CD8-positive, alpha-beta memory T cell (primary cell): ENCODE measurements at regions of chr9 and their contacts with region 1.

Region 1: GRCh38 chr9:4792572-4793458 is at the start of gene RCL1:
- DNase-seq: peak; percentile 93 to 97 (median 96)
- H3K4me3 ChIP-seq: peak within 1 kb of the TSS; percentile 82
- H3K4me3 Mint-ChIP-seq: peak within 1 kb of the TSS; percentile 92 to 96 (median 95)
- H3K27ac ChIP-seq: peak within 1 kb of the TSS; percentile 92
- H3K27ac Mint-ChIP-seq: peak within 1 kb of the TSS; percentile 94 to 99 (median 95)
- H3K4me1 ChIP-seq: peaks cover 20% of the 10 kb centered on the region
- H3K4me1 Mint-ChIP-seq: peaks cover 21 to 53% (median 48%) of the 10 kb centered on the region in 3 donors
- H3K27me3 ChIP-seq: no peaks in the 10 kb centered on the region
- H3K27me3 Mint-ChIP-seq: peaks cover 1 to 2% of the 10 kb centered on the region in 2 donors
- total RNA-seq, gene RCL1: 36.5 to 39.1 TPM

Region 2: GRCh38 chr9:4519604-4520003 is 273.2 kb before region 1 on chr9:
- CTCF ChIA-PET with region 1: no interaction called
- POLR2A ChIA-PET with region 1: no interaction called
- DNase-seq: no peak
- H3K4me3 ChIP-seq: no peak overlapping the region
- H3K4me3 Mint-ChIP-seq: no peak overlapping the region
- H3K27ac ChIP-seq: no peak overlapping the region
- H3K27ac Mint-ChIP-seq: peak overlapping the region in 2 of 8 donors; percentile 15 to 23
- H3K4me1 ChIP-seq: no peaks in the 10 kb centered on the region
- H3K4me1 Mint-ChIP-seq: peaks cover 11 to 14% (median 11%) of the 10 kb centered on the region in 3 donors
- H3K27me3 ChIP-seq: no peaks in the 10 kb centered on the region
- H3K27me3 Mint-ChIP-seq: peaks cover 0 to 6% of the 10 kb centered on the region in 2 donors

Region 3: DNA sequence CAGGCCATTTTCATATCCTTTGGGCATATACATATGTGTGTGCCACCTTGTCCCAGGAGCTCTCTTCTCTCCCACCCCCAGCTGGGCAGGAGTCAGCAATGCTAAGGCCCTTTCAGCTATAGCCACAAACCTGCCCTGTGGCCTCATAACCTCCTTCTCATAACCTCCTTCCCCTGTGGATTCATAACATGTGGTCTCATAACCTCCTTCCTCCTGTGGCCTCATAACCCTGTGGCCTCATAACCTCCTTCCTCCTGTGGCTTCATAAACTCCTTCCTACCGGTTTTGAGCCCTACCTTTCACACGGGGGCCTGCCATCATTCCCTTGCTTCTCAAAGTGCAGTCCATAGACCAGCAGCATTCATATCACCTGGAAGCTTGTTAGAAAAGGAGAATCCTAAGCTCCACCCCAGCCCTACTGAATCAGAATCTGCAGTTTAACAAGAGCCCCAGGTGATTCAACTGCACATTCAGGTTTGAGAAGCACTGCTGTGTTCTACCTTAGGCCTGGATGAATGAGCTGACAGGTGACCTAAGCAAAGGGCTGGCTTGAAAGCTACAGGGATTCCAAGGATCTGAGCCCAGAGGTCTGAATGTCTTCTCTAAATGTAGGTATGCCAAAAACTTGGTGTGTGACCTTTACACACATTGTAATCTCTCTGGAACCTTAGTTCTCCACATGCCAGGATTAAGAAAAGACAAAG is 172.6 kb before region 1 on chr9:
- CTCF ChIA-PET with region 1: no interaction called
- POLR2A ChIA-PET with region 1: no interaction called
- DNase-seq: peak in 1 of 5 donors; percentile 25
- H3K4me3 ChIP-seq: no peak overlapping the region
- H3K4me3 Mint-ChIP-seq: peak overlapping the region in 5 of 7 donors; percentile 35 to 62 (median 59)
- H3K27ac ChIP-seq: no peak overlapping the region
- H3K27ac Mint-ChIP-seq: peak overlapping the region; percentile 8 to 76 (median 56)
- H3K4me1 ChIP-seq: peaks cover 13% of the 10 kb centered on the region
- H3K4me1 Mint-ChIP-seq: peaks cover 23 to 33% (median 32%) of the 10 kb centered on the region in 3 donors
- H3K27me3 ChIP-seq: peaks cover 5% of the 10 kb centered on the region
- H3K27me3 Mint-ChIP-seq: no peaks in the 10 kb centered on the region

Region 4: DNA sequence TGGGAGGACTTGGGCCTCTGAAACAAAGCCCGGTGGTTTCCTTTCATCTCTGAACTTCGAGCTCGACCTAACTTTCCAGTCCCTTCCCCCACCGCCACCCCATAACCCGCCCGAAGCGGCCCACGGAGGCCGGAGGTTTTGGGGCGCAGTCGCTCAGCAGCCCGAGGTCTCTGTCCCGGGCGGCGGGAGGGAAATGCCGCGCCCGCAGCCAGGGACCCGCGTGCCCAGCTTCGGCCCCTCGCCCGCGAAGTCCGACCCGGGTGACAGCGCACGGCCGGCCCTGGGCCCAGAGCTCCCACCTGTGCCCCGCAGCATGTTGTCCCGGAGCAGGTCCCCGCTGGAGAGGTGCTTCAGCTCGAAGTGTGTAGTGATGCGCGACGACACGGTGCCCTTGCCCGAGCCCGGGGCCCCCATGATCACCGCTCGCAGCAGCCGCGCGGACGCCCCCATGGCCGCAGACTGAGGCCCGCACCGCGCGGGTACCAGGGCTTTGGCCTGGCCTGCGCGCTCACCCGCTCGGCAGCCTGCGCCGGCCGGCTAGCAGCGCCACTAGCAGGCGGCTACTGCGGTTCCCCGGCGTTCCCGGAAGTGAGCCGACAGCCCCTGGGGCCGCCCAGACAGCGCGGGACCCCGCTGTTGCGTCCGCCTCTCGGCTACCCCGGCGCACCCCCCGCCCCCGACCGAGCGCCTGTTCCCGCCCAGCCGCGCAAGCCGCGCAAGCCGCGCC is 52.0 kb before region 1 on chr9 and contains the start of gene AK3:
- CTCF ChIA-PET with region 1: interaction called, 11 read pairs
- POLR2A ChIA-PET with region 1: interaction called, 7 read pairs
- DNase-seq: peak; percentile 85 to 92 (median 87)
- H3K4me3 ChIP-seq: peak within 1 kb of the TSS; percentile 86
- H3K4me3 Mint-ChIP-seq: peak within 1 kb of the TSS; percentile 85 to 100 (median 94)
- H3K27ac ChIP-seq: peak within 1 kb of the TSS; percentile 79
- H3K27ac Mint-ChIP-seq: peak within 1 kb of the TSS; percentile 86 to 99 (median 92)
- H3K4me1 ChIP-seq: peaks cover 25% of the 10 kb centered on the region
- H3K4me1 Mint-ChIP-seq: peaks cover 30 to 50% (median 43%) of the 10 kb centered on the region in 3 donors
- H3K27me3 ChIP-seq: no peaks in the 10 kb centered on the region
- H3K27me3 Mint-ChIP-seq: no peaks in the 10 kb centered on the region
- total RNA-seq, gene AK3: 25.3 to 29.8 TPM

Region 5: GRCh38 chr9:4984621-4985385 is 192.0 kb after region 1 on chr9 and contains the start of gene JAK2:
- CTCF ChIA-PET with region 1: interaction called, 12 read pairs
- POLR2A ChIA-PET with region 1: interaction called, 14 read pairs
- DNase-seq: peak; percentile 74 to 88 (median 78)
- H3K4me3 ChIP-seq: peak within 1 kb of the TSS; percentile 44
- H3K4me3 Mint-ChIP-seq: peak within 1 kb of the TSS; percentile 88 to 93 (median 92)
- H3K27ac ChIP-seq: peak within 1 kb of the TSS; percentile 74
- H3K27ac Mint-ChIP-seq: peak within 1 kb of the TSS; percentile 81 to 96 (median 90)
- H3K4me1 ChIP-seq: peaks cover 34% of the 10 kb centered on the region
- H3K4me1 Mint-ChIP-seq: peaks cover 27 to 34% (median 28%) of the 10 kb centered on the region in 3 donors
- H3K27me3 ChIP-seq: no peaks in the 10 kb centered on the region
- H3K27me3 Mint-ChIP-seq: no peaks in the 10 kb centered on the region
- total RNA-seq, gene JAK2: 24.9 to 25.1 TPM

Region 6: DNA sequence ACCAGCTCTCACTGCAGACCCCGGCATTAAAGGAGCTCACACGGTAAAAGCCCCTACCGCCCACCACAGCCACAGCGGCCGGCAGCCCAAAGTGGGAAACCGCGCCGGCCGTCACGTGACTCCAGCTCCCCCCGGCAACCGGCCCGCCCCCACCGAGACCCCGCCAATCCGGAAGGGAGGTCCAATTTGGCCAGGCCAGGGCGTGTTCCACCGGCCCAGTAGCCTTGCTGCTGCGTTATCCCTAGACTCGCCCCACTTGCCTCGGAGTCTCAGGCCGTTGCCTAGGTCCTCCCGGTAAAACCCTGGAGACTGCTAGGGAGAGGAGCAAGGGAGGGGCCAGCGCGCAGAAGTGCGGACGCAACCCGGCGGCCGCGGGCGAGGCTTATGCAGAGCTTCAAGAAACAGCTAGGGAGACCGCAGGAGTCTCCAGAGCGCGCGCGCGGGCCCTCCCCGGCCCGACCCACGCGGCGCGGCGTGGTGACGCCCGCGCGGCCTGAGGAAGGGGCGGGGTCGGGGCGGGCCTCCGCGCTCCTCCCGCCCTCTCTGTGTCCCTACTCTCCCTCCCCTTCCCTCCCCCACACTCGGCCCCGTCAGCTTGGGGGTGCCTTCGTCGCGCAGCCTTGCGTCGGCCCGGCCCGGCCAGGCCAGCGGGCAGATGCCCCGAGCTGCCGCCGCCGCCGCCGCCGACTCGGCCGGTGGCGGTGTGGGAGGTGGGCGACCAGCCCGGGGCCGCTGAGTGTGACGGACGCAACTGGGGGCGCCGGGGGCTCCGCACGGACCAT is 835.9 kb after region 1 on chr9 and contains the start of gene RIC1:
- CTCF ChIA-PET with region 1: no interaction called
- POLR2A ChIA-PET with region 1: interaction called, 10 read pairs
- DNase-seq: peak; percentile 84 to 92 (median 90)
- H3K4me3 ChIP-seq: peak within 1 kb of the TSS; percentile 68
- H3K4me3 Mint-ChIP-seq: peak within 1 kb of the TSS; percentile 96 to 99 (median 98)
- H3K27ac ChIP-seq: peak within 1 kb of the TSS; percentile 81
- H3K27ac Mint-ChIP-seq: peak within 1 kb of the TSS; percentile 93 to 99 (median 98)
- H3K4me1 ChIP-seq: peaks cover 47% of the 10 kb centered on the region
- H3K4me1 Mint-ChIP-seq: peaks cover 52 to 72% (median 65%) of the 10 kb centered on the region in 3 donors
- H3K27me3 ChIP-seq: no peaks in the 10 kb centered on the region
- H3K27me3 Mint-ChIP-seq: no peaks in the 10 kb centered on the region
- total RNA-seq, gene RIC1: 13.2 to 15.0 TPM